OCI-LY7 (cell line): ENCODE measurements at regions of chr3 and their contacts with region 1.

Region 1: GRCh38 chr3:66971891-66972551 is 26.1 kb upstream of the KBTBD8 start:
- DNase-seq: peak; percentile 94
- H3K4me3 ChIP-seq: peak overlapping the region; percentile 39
- H3K27ac ChIP-seq: peak overlapping the region; percentile 73
- H3K4me1 ChIP-seq: peaks cover 21% of the 10 kb centered on the region
- CTCF ChIP-seq: peak; percentile 95

Region 2: DNA sequence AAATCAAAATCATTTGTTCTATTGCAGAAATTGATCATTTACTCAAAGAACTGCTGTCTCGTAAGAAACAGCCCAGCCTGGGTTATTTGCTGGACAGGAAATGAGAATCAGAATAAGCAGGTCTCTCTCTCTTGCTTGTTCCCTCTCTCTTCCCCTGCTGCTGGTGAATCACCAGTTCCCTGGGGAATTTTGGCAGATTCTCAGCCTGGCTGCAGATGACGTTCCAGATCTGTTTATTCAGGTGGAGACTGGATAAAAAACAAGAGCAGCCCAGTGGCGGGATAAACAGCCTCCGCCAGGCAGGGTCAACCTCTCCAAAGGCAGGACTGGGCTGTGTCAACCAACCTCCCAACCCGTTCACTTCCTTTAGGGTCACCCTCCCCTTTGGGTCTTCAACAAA is 543.3 kb before region 1 on chr3:
- CTCF ChIA-PET with region 1: no interaction called
- POLR2A ChIA-PET with region 1: no interaction called
- intact Hi-C with region 1: no loop called
- DNase-seq: no peak
- H3K4me3 ChIP-seq: no peak overlapping the region
- H3K27ac ChIP-seq: no peak overlapping the region
- H3K4me1 ChIP-seq: no peaks in the 10 kb centered on the region
- CTCF ChIP-seq: no peak

Region 3: DNA sequence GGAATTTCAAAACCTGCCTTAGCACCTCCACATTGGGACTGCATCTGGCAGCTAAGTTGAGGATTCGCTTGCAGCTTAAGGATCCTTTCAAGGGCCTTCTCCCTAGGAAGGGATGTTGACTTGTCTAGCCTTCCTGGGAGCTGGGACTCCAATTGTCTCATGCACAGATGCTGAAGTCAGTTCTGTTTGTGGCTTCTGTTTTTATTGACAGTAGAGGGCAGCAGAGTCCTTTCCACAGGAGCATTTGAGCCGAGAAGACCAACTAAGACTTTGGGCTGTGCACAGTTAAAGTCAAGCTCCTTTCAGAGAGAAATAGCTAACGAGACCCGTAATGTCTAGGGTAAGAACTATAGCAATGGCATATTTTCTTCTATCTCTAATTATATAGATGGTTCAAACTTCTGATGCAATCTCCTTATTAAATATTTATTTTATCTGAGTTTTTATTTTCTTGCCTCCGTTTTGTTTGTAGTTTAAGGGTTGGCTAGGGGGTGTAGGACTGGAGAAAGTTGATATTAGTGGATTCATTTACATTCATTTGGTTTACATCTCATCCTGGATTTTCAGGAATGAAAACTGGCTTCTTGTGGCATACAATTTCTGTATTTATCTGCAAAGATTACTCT is 33.6 kb before region 1 on chr3:
- CTCF ChIA-PET with region 1: interaction called, 10 read pairs
- POLR2A ChIA-PET with region 1: interaction called, 13 read pairs
- intact Hi-C with region 1: loop called (anchors 2 kb)
- DNase-seq: peak; percentile 73
- H3K4me3 ChIP-seq: no peak overlapping the region
- H3K27ac ChIP-seq: no peak overlapping the region
- H3K4me1 ChIP-seq: no peaks in the 10 kb centered on the region
- CTCF ChIP-seq: peak; percentile 89

Region 4: DNA sequence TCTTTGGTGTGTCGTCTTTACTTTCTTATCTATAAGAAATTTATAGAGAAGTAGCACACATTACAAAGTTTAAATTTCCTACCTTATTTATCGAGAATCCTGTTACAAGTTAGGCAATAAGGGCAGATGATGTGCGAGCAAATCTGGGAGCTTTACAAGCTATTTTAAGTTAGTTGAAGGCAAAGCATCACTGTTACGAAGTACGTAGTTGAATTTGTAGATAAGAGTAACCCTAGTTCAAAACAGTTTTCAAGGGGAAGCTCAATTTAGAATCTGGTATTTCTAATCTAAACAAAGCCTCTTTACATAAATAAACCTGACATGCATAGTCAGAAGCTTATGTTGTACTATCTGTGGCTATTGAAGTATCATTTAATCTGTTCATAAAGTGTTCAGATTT is 34.4 kb after region 1 on chr3:
- CTCF ChIA-PET with region 1: interaction called, 6 read pairs
- POLR2A ChIA-PET with region 1: interaction called, 11 read pairs
- intact Hi-C with region 1: no loop called
- DNase-seq: no peak
- H3K4me3 ChIP-seq: peak overlapping the region; percentile 4
- H3K27ac ChIP-seq: no peak overlapping the region
- H3K4me1 ChIP-seq: peaks cover 52% of the 10 kb centered on the region
- CTCF ChIP-seq: no peak

Region 5: GRCh38 chr3:67037615-67038014 is 65.6 kb after region 1 on chr3:
- CTCF ChIA-PET with region 1: interaction called, 16 read pairs
- POLR2A ChIA-PET with region 1: interaction called, 26 read pairs
- intact Hi-C with region 1: loop called (anchors 1 kb)
- DNase-seq: peak; percentile 50
- H3K4me3 ChIP-seq: no peak overlapping the region
- H3K27ac ChIP-seq: no peak overlapping the region
- H3K4me1 ChIP-seq: peaks cover 8% of the 10 kb centered on the region
- CTCF ChIP-seq: peak; percentile 69

Region 6: GRCh38 chr3:67245545-67245944 is 273.5 kb after region 1 on chr3:
- CTCF ChIA-PET with region 1: no interaction called
- POLR2A ChIA-PET with region 1: no interaction called
- intact Hi-C with region 1: no loop called
- DNase-seq: no peak
- H3K4me3 ChIP-seq: no peak overlapping the region
- H3K27ac ChIP-seq: no peak overlapping the region
- H3K4me1 ChIP-seq: no peaks in the 10 kb centered on the region
- CTCF ChIP-seq: no peak